GM12878 (cell line): ENCODE measurements at regions of chr15 and their contacts with region 1.

Region 1: GRCh38 chr15:74053941-74054529 is 28.3 kb downstream of the GOLGA6A start:
- DNase-seq: peak; percentile 21
- ATAC-seq: peak; percentile 98
- H3K4me3 ChIP-seq: no peak overlapping the region
- H3K27ac ChIP-seq: no peak overlapping the region
- H3K4me1 ChIP-seq: no peaks in the 10 kb centered on the region
- H3K27me3 ChIP-seq: 0 out of 4 replicates have a peak, but pooled peaks cover 0 to 2% of the 10 kb centered on the region in 2 experiments
- CTCF ChIP-seq: peak; percentile 40 to 79 (median 57); a peak in 5 of 6 replicates
- EP300 ChIP-seq: no peak
- POLR2A ChIP-seq: no peak
- RAD21 ChIP-seq: peak; percentile 52

Region 2: GRCh38 chr15:74036271-74037170 is 17.5 kb before region 1 on chr15:
- CTCF ChIA-PET with region 1: interaction called, 30 read pairs
- POLR2A ChIA-PET with region 1: interaction called, 3 read pairs
- RAD21 ChIA-PET with region 1: no interaction called
- SMC1A ChIA-PET with region 1: interaction called, 3 read pairs
- in situ Hi-C with region 1: no loop called
- intact Hi-C with region 1: no loop called
- DNase-seq: no peak
- ATAC-seq: no peak
- H3K4me3 ChIP-seq: no peak overlapping the region
- H3K27ac ChIP-seq: no peak overlapping the region
- H3K4me1 ChIP-seq: no peaks in the 10 kb centered on the region
- H3K27me3 ChIP-seq: no peaks in the 10 kb centered on the region
- CTCF ChIP-seq: peak; percentile 23 to 32 (median 23); a peak in 3 of 6 replicates
- EP300 ChIP-seq: no peak
- POLR2A ChIP-seq: peak; percentile 56
- RAD21 ChIP-seq: 0 out of 2 replicates have a peak, but pooled peaks have one; percentile 30

Region 3: GRCh38 chr15:74307827-74308644 is 254.0 kb after region 1 on chr15:
- CTCF ChIA-PET with region 1: interaction called, 4 read pairs
- POLR2A ChIA-PET with region 1: no interaction called
- RAD21 ChIA-PET with region 1: interaction called, 6 read pairs
- SMC1A ChIA-PET with region 1: interaction called, 6 read pairs
- in situ Hi-C with region 1: no loop called
- intact Hi-C with region 1: loop called (anchors 5 kb)
- DNase-seq: no peak
- ATAC-seq: peak; percentile 89
- H3K4me3 ChIP-seq: no peak overlapping the region
- H3K27ac ChIP-seq: no peak overlapping the region
- H3K4me1 ChIP-seq: no peaks in the 10 kb centered on the region
- H3K27me3 ChIP-seq: peaks cover 0 to 2% of the 10 kb centered on the region in 2 experiments; a peak in 2 of 4 replicates
- CTCF ChIP-seq: peak; percentile 68 to 79 (median 75)
- EP300 ChIP-seq: no peak
- POLR2A ChIP-seq: no peak
- RAD21 ChIP-seq: peak; percentile 94

Region 4: DNA sequence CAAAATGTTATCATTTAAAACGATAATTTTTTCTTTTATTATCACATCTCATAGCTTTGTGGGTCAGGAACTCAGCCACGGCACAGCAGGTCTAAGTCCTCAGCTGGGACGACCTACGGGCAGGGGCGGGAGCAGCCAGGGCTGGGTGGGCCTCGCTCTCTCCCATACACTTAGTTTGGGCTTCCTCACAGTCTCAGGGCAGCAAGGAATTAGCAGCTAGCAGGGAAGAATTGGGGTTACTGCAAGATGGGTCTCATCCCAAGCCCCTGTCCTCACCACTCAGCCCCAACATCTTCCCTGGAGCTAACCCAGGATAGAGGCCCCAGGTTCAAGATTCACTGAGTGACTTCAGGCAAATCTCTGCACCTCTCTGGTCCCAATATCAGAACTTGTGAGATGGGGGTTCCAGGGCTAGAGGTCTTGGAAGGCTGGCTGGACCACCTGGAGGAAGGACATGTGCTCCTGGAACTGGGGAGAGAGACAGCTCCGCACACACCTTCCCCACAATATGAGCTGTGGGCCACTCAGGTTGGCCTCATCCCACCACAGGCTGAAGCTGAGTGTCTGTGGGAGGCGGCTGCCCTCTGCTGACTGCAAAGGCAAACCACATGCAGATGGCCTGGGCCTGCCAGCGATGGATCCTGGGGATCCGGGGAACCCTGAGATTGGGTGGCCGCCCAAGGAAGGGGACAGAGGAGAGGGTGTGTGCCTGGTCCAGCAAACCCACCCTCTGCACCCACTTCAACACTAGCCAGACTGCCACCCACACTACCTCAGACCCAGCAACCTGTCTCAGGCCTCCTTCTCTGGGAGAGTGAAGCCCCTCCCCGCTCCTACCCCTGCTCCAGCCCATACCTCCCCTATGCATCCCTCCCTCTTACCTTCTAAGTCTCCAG is 268.4 kb after region 1 on chr15:
- CTCF ChIA-PET with region 1: interaction called, 8 read pairs
- POLR2A ChIA-PET with region 1: no interaction called
- RAD21 ChIA-PET with region 1: interaction called, 3 read pairs
- SMC1A ChIA-PET with region 1: interaction called, 3 read pairs
- in situ Hi-C with region 1: no loop called
- intact Hi-C with region 1: loop called (anchors 1 kb)
- DNase-seq: no peak
- ATAC-seq: peak; percentile 95
- H3K4me3 ChIP-seq: no peak overlapping the region
- H3K27ac ChIP-seq: no peak overlapping the region
- H3K4me1 ChIP-seq: peaks cover 30% of the 10 kb centered on the region
- H3K27me3 ChIP-seq: no peaks in the 10 kb centered on the region
- CTCF ChIP-seq: peak; percentile 94 to 96 (median 94)
- EP300 ChIP-seq: no peak
- POLR2A ChIP-seq: no peak
- RAD21 ChIP-seq: peak; percentile 91

Region 5: GRCh38 chr15:74407055-74407691 is 353.1 kb after region 1 on chr15:
- CTCF ChIA-PET with region 1: no interaction called
- POLR2A ChIA-PET with region 1: no interaction called
- RAD21 ChIA-PET with region 1: no interaction called
- SMC1A ChIA-PET with region 1: no interaction called
- in situ Hi-C with region 1: no loop called
- intact Hi-C with region 1: no loop called
- DNase-seq: no peak
- ATAC-seq: no peak
- H3K4me3 ChIP-seq: no peak overlapping the region
- H3K27ac ChIP-seq: no peak overlapping the region
- H3K4me1 ChIP-seq: peaks cover 41% of the 10 kb centered on the region
- H3K27me3 ChIP-seq: no peaks in the 10 kb centered on the region
- CTCF ChIP-seq: no peak
- EP300 ChIP-seq: no peak
- POLR2A ChIP-seq: no peak
- RAD21 ChIP-seq: no peak